ENCODE measurements at regions of chr17 and their contacts with region 1.

Region 1: DNA sequence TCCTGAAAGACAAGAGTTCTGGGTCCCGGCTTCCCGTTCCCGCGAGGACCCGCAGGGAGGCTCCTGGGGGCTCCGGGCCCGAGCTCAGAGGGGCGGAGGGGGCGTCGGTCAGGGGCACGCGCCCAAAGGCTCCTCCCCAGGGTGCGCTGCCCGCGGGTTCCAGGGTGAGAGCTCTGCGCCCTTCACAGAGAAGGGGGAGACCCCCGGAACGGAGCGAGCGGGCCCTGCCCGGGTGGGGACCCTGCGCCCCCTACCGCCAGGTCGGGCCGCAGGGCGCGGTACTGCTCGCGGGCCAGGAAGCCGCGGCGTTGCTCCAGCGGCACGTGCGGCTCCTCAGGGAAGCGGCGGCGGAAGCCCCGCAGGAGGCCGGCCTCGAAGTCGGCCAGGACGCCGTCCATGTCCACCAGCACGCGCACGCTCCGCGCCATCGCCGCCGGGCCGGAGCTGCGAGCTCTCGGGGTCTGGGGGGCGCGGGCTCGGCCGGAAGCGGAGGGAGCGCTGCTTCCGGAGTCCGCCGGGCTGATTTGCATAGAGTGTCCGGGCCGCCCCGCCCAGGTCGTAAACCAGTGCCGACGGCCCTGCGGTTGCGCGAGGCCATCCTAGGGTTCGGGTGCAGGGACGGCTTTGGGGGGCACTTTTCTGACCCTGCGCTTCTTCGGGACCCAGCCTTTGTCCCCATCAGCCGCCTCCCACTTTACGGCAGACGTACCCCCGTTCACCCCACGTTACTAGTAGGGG is at the start of gene NT5C:
- DNase-seq: peak; percentile 67
- H3K4me3 Mint-ChIP-seq: peak within 1 kb of the TSS; percentile 88
- H3K27ac Mint-ChIP-seq: peak within 1 kb of the TSS; percentile 83
- H3K4me1 Mint-ChIP-seq: peaks cover 9% of the 10 kb centered on the region
- H3K27me3 Mint-ChIP-seq: no peaks in the 10 kb centered on the region
- total RNA-seq, gene NT5C: 72.7 and 86.6 TPM in 2 replicates

Region 2: DNA sequence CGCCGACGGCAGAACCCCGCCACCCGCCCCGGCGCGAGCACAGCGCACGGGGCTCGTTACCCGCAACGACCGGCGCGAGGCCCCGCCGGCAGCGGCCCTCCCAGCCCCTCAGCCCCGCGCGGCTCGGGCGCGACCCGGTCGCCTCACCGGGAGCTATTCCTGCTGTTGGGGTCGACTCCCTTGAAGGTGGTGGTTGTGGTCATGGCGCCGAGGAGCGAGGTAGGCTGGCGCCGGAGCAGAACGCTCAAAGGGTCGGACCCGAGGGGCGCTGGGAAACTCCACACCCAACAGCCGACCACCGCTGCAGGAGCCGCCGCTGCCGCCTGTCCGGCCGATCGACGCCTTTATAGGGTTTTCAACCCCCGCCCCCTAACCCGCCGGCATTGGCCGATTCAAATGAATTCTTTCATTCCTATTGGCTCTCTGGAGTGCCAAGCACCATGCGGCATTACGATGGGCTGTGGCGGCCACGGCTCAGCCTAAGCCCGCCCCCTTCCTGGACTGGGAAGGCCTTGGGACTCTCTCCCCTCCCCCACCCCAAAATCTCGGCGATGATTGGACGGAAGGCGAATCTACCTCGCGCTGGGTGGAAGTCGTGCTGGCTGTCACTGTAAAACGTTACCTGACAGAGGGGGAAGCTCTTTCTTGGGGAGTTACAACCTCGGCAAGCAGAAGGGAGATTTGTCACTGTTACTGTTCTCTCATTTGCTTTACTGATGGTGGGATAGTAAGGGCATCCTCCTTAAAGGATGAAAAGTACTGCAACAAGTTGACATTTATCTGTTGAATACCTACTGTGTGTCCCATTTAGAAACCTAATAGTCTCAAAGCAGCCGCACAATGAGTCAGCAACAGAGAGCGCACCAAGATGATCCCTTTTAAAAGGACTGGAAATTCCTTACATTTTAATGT is 23.0 kb after region 1 on chr17 and contains the start of gene JPT1:
- intact Hi-C with region 1: loop called (anchors 1 kb)
- DNase-seq: peak; percentile 96
- H3K4me3 Mint-ChIP-seq: peak within 1 kb of the TSS; percentile 93
- H3K27ac Mint-ChIP-seq: peak within 1 kb of the TSS; percentile 84
- H3K4me1 Mint-ChIP-seq: peaks cover 33% of the 10 kb centered on the region
- H3K27me3 Mint-ChIP-seq: no peaks in the 10 kb centered on the region
- total RNA-seq, gene JPT1: 282 and 290 TPM in 2 replicates

Measured in activated T-helper 2 cell treated with anti-CD3 and anti-CD28 coated beads, Interferon-gamma antibody, Interleukin-2, Interleukin-4, amounts not matched to agents 10 μg/mL and 5 μg/mL and 100 μg/mL, durations not matched to agents 14 hours and 24 hours and 36 hours (primary cell).